ENCODE measurements at regions of chr6 and their contacts with region 1.

Region 1: DNA sequence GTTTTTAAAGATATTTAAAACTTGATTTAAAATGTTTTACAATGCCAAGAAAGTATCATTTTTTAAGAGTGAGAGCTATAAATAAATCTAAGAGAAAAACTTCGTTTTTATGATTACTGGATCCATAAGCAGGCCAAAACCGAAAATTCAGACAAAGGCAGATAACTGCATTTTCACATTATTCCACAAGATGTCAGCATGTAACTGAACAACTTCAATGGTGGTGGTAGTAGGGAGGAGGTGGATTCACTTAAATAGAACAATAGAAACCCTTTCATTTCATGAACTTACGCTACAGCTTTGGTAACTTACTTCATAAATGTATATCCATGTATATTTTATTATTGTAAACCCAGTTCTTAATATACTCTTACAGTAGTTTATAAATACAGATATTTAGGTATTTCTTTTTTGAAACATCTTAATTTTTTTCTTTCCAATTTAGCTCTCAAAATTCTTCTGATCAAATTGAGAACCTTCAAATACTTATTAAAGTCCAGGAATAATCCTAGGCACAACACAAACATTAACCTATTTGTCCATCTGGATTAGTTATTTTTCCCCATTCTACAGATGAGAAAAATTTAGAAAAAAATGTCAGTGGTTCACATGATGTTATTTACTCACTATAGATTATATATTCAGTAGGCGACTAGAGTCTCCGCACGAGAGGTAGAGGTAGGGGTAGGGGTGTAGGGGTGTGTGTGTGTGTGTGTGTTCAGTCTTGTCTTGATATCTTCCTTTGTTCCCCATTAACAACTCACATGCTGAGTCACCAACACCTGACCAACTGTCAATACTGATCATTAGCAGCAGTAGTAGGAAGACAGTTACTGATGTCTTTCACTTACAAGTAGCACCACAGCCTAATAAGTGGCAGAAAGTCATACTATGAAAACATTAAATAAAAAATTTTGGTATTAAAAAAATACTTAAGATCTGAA is 111.5 kb downstream of the ARHGAP18 start:
- DNase-seq: no peak
- H3K4me3 ChIP-seq: no peak overlapping the region
- H3K27ac ChIP-seq: no peak overlapping the region
- H3K4me1 ChIP-seq: no peaks in the 10 kb centered on the region
- H3K27me3 ChIP-seq: no peaks in the 10 kb centered on the region
- CTCF ChIP-seq: peak; percentile 66 to 83 (median 72)
- EP300 ChIP-seq: no peak
- POLR2A ChIP-seq: no peak

Region 2: DNA sequence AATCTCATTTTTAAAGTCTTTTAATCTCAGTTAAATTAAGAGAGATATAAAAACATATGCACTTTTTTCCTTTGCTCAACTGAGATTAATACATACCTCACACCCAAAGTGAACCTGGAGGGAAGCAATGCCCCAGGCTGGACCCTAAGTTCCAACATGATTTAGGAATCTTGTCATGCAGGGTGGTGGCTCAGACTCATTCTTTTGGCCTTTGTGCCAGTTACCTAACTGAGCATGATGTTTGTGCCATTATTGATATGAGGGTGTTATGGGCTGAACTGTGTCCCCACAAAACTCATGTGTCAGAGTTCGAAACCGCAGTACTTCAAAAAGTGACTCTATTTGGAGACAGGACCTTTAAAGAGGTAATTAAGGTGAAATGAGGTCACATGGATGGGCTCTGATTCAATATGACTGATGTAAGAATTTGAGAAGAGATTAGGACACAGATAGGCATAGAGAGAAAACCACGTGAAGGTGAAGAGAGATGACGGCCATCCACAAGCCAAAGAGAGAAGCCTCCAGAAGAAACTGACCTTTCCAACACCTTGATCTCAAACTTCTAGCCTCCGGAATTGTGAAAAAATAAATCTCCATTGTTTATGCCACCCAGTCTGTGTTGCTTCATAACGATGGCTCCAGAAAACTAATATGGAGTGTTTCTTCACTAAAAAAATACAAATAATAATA is 76.4 kb before region 1 on chr6:
- intact Hi-C with region 1: no loop called
- DNase-seq: no peak
- H3K4me3 ChIP-seq: no peak overlapping the region
- H3K27ac ChIP-seq: no peak overlapping the region
- H3K4me1 ChIP-seq: peaks cover 0 to 7% (median 3%) of the 10 kb centered on the region in 4 donors
- H3K27me3 ChIP-seq: no peaks in the 10 kb centered on the region
- CTCF ChIP-seq: no peak
- EP300 ChIP-seq: no peak
- POLR2A ChIP-seq: no peak

Region 3: DNA sequence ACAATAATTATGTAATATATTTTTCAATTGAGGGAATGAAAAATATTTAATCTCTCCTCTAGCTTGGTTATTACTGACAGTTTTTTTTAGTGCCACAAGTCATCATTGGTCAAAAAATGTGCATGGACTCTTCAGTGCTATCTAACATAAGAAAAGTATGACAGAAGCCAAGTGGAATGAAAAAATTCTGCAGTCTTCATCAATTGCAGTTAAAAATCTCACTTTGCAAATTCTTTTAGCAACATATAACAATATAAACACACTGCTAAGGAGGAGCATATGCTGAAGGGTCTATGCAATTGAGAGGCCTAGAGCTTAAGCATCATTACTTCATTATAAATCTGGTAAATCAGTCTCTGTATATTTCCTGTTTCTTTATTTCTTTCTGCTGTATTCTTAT is 63.6 kb before region 1 on chr6:
- intact Hi-C with region 1: no loop called
- DNase-seq: no peak
- H3K4me3 ChIP-seq: no peak overlapping the region
- H3K27ac ChIP-seq: no peak overlapping the region
- H3K4me1 ChIP-seq: no peaks in the 10 kb centered on the region
- H3K27me3 ChIP-seq: no peaks in the 10 kb centered on the region
- CTCF ChIP-seq: no peak
- EP300 ChIP-seq: no peak
- POLR2A ChIP-seq: no peak

Region 4: GRCh38 chr6:129730477-129731165 is 132.1 kb after region 1 on chr6:
- intact Hi-C with region 1: loop called (anchors 5 kb)
- DNase-seq: no peak
- H3K4me3 ChIP-seq: no peak overlapping the region
- H3K27ac ChIP-seq: no peak overlapping the region
- H3K4me1 ChIP-seq: no peaks in the 10 kb centered on the region
- H3K27me3 ChIP-seq: no peaks in the 10 kb centered on the region
- CTCF ChIP-seq: peak in 3 of 4 experiments; percentile 15 to 39 (median 26)
- EP300 ChIP-seq: no peak
- POLR2A ChIP-seq: no peak

Region 5: DNA sequence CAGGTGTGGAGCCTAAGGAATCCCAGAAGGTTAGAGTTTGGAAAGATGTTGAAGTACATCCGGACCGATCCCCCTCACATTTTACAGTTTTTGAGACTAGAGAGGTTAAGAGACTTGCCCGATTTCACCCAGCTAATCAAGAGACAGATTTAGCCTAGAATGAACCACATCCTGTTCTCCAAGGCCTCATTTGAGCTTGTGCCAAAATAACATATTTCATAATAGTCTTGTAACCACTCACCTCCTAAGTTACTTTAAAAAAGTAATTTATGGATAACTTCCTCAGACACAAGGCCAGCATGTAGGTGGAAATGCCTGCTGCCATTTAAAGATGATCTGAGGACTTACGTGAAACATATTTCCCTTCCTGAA is 151.2 kb after region 1 on chr6:
- intact Hi-C with region 1: loop called (anchors 2 kb)
- DNase-seq: no peak
- H3K4me3 ChIP-seq: no peak overlapping the region
- H3K27ac ChIP-seq: peak overlapping the region; percentile 3 to 56 (median 40)
- H3K4me1 ChIP-seq: peaks cover 0 to 32% (median 15%) of the 10 kb centered on the region in 4 donors
- H3K27me3 ChIP-seq: no peaks in the 10 kb centered on the region
- CTCF ChIP-seq: no peak
- EP300 ChIP-seq: no peak
- POLR2A ChIP-seq: no peak

Region 6: GRCh38 chr6:129936329-129937165 is 338.0 kb after region 1 on chr6:
- intact Hi-C with region 1: loop called (anchors 10 kb)
- DNase-seq: no peak
- H3K4me3 ChIP-seq: no peak overlapping the region
- H3K27ac ChIP-seq: no peak overlapping the region
- H3K4me1 ChIP-seq: peaks cover 0 to 5% (median 0%) of the 10 kb centered on the region in 4 donors
- H3K27me3 ChIP-seq: no peaks in the 10 kb centered on the region
- CTCF ChIP-seq: no peak
- EP300 ChIP-seq: no peak
- POLR2A ChIP-seq: no peak

Region 7: GRCh38 chr6:130009146-130009545 is 410.6 kb after region 1 on chr6:
- intact Hi-C with region 1: no loop called
- DNase-seq: no peak
- H3K4me3 ChIP-seq: no peak overlapping the region
- H3K27ac ChIP-seq: no peak overlapping the region
- H3K4me1 ChIP-seq: no peaks in the 10 kb centered on the region
- H3K27me3 ChIP-seq: no peaks in the 10 kb centered on the region
- CTCF ChIP-seq: no peak
- EP300 ChIP-seq: no peak
- POLR2A ChIP-seq: no peak

Region 8: DNA sequence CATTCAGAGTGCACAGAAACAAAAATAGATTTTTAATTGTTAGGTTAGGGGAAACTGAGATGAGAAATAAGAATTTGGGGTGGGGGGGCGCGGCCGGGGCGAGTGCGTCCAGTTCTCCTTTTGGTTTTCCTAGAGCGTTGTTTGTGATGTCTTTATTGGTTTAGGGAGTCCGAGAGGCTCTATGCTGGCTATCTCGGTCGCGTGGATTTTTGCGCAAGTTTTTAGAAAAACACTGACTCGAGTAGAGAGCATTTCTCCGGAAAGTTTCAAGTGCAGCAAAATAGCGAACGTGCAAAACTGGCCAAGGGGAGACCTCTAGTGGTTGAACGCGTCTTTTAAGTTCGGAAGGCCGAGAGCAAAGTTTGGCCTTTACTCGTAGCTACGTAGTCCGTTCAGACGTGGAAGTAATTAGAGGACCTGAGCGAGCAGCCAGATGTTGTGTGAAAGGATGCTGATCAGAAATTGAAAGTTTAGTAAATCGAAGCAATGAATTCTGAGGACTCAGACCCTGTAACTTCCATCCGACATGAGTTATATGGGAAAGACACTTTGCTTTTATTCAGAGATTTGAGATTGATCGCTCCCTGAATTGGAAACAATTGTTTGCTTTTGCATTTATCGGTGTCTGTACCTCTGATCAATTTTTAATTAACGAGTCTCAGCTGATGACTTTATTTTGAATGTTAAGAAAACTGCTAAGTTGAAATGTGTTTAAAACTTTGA is 422.6 kb after region 1 on chr6:
- intact Hi-C with region 1: loop called (anchors 2 kb)
- DNase-seq: peak; percentile 93
- H3K4me3 ChIP-seq: peak overlapping the region; percentile 73 to 91 (median 86)
- H3K27ac ChIP-seq: peak overlapping the region; percentile 76 to 85 (median 82)
- H3K4me1 ChIP-seq: peaks cover 0 to 11% (median 4%) of the 10 kb centered on the region in 4 donors
- H3K27me3 ChIP-seq: no peaks in the 10 kb centered on the region
- CTCF ChIP-seq: peak; percentile 60 to 79 (median 70)
- EP300 ChIP-seq: no peak
- POLR2A ChIP-seq: no peak